Psoas muscle (tissue), 8 donors: ENCODE measurements at regions of chr3 and their contacts with region 1.

Region 1: GRCh38 chr3:52742418-52743041 is 28.2 kb downstream of the NEK4 start:
- DNase-seq: no peak
- ATAC-seq: peak in 2 of 4 donors; percentile 53 to 74
- H3K4me3 ChIP-seq: no peak overlapping the region
- H3K27ac ChIP-seq: no peak overlapping the region
- H3K4me1 ChIP-seq: no peaks in the 10 kb centered on the region
- H3K27me3 ChIP-seq: no peaks in the 10 kb centered on the region
- CTCF ChIP-seq: peak; percentile 65

Region 2: DNA sequence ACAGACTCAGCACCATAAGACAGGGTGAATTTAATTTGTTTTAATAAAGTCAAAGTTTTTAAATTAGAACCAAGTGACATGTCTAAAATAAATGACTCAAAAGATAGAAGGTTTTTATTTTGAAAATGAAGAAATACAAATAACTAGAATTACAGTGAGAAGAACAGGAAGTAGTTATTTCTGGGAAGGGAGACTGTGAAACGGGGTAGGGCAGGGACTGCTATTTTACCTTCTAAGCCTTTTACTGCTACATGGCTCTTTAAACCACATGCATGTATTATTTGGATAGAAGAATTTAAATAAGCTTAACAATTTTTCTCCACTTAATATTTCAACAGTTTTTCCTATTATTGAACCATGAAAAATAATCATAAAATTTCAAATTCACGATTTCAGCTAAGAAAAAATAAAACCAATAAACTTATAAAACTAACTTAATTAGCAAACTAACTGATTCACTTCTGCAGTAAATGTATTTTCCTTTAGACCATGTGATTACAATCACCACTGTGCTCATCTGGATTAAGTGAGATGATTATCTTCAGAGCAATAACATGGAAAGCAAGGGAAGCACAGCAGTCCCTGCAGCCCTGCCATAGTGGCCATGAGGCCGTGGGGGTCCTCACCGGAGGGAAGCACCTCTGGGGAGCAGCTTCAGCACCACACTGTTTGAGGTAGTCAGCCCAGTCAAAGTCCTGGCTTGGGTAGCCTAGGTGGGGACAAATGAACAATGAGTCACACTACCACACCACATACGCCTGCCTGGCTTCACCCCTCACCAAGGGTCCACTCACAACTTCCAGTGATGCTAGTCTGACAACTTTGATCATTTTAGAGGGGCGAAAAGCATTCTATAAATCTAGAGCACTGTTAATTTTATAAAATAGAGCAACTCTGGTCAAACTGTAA is 183.1 kb after region 1 on chr3:
- intact Hi-C with region 1: loop called in 1 of 2 experiments (anchors 10 kb)
- DNase-seq: no peak
- ATAC-seq: no peak
- H3K4me3 ChIP-seq: no peak overlapping the region
- H3K27ac ChIP-seq: no peak overlapping the region
- H3K4me1 ChIP-seq: no peaks in the 10 kb centered on the region
- H3K27me3 ChIP-seq: no peaks in the 10 kb centered on the region
- CTCF ChIP-seq: no peak

Region 3: DNA sequence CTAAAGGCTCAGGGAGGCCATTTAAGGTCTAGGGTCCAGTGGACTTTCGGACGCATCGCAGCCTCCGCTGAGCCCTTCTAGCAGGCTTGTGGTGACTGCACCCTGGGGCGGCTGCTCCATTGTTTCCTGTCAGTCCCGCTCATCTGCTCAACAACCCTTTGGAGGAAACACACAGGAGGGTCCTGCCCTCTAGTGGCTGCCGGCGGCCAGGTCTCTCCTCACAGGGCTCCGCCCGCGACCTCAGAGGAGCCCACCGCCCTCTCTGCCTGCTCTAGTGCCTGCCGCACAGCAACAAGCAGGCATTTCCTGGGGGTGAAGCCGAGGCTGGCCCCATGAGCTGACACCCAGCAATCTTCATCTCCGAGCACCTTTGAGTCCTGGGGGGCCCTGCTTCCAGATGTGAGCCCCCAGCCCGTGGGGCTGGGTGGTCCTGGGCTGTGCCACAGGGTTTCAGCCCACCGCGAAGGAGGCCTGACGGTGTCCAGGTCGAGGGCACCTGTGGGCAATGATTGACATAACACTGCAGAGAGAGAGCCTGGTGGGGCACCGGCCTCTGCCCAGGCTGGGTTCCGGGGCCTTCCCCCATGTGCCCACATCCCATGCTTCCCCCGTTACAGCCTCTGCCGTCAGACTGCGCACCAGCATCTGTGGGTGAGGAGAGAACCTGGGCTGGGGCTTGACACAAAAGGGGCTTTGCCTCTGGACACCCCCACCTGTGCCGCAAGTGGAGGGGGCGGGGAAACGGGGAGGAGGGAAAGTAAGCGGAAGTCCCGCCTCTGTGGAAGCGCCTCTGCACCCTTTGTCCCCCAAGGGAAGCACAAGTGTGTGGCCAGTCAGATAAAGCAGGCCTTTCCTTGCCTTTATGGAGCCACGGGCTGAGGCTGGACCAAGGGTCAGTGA is 330.4 kb after region 1 on chr3:
- intact Hi-C with region 1: loop called in 1 of 2 experiments (anchors 2 kb)
- DNase-seq: peak; percentile 85 to 89
- ATAC-seq: peak; percentile 91 to 97 (median 94)
- H3K4me3 ChIP-seq: peak overlapping the region; percentile 81
- H3K27ac ChIP-seq: peak overlapping the region; percentile 50
- H3K4me1 ChIP-seq: peaks cover 13% of the 10 kb centered on the region
- H3K27me3 ChIP-seq: no peaks in the 10 kb centered on the region
- CTCF ChIP-seq: peak; percentile 90